AG04450 (cell line): ENCODE measurements at regions of chr4 and their contacts with region 1.

Region 1: GRCh38 chr4:72489267-72489666 is 79.8 kb downstream of the ADAMTS3 start:
- DNase-seq: no peak
- H3K4me3 ChIP-seq: no peak overlapping the region
- H3K27ac ChIP-seq: no peak overlapping the region
- H3K27me3 ChIP-seq: no peaks in the 10 kb centered on the region
- CTCF ChIP-seq: no peak

Region 2: GRCh38 chr4:72505314-72505744 is 16.1 kb after region 1 on chr4:
- CTCF ChIA-PET with region 1: interaction called, 10 read pairs
- POLR2A ChIA-PET with region 1: no interaction called
- DNase-seq: peak; percentile 26
- H3K4me3 ChIP-seq: no peak overlapping the region
- H3K27ac ChIP-seq: no peak overlapping the region
- H3K27me3 ChIP-seq: no peaks in the 10 kb centered on the region
- CTCF ChIP-seq: peak; percentile 90